Mammary epithelial cell (primary cell): ENCODE measurements at regions of chr5 and their contacts with region 1.

Region 1: DNA sequence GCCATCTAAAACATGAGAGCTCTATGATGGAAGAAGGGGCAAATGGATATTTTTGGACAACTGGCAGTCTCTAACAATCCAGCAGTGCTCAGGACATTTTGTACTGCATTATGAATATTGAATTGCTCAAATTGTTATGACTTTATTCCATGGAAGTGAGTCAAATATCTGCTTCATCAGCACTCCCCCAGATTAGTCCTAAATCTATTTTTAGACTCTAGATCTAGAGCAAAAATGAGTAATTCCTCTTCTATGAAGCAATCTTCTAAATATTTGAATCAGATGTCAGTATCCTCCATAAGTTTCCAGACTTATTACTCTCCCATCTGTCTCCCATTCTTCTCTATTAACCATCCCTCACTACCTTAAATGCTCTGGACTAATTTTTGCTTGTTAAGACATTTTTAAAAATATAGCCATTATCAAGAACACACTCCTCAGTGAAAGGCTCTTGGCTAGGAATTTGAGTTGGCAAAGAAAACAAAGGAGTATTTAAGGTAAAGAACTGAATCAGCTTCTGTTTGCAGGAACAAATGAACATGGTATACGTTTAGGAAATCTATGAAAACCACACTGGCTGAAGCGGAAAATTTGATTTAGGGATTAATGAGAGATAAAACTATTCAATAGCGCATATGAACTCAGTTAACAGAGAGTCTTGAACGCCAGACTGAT is 300.9 kb downstream of the MCTP1 start:
- DNase-seq: peak; percentile 63
- H3K4me3 ChIP-seq: no peak overlapping the region
- H3K27ac ChIP-seq: no peak overlapping the region
- H3K4me1 ChIP-seq: peaks cover 5% of the 10 kb centered on the region
- H3K27me3 ChIP-seq: no peaks in the 10 kb centered on the region
- CTCF ChIP-seq: no peak

Region 2: DNA sequence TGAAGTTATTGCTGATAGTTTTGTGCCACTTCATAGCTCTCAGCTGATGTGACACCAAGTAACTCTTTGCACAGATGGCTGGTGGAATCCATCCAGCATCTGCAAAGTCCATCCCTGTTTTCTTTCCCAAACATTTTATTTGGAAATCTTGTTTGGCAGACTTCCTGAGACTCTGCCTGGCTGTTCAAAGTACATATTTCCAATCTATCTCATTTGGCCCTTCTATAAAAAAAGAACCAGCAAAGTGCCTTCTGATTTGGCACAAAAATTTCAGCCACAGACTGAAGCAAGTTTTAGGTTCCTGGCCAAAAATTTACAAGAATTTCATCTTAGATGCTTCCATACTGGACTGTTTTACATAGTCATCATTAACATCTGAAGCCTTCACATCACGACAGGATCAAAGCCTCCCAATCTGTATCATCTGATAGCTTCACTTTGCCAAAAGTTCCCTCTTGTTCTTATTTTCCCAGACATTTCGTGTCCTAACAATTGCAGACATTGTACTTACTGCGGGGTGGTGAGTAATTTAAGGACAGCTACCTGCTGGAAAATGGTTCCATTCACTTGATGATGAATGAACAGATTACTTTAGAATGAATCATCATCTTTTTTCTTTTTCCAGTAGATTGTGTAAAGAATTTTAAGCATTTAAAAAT is 742.9 kb before region 1 on chr5:
- CTCF ChIA-PET with region 1: no interaction called
- dilution Hi-C with region 1: no loop called
- in situ Hi-C with region 1: no loop called
- intact Hi-C with region 1: no loop called
- DNase-seq: peak; percentile 83
- H3K4me3 ChIP-seq: no peak overlapping the region
- H3K27ac ChIP-seq: peak overlapping the region; percentile 19
- H3K4me1 ChIP-seq: peaks cover 10% of the 10 kb centered on the region
- H3K27me3 ChIP-seq: no peaks in the 10 kb centered on the region
- CTCF ChIP-seq: no peak

Region 3: GRCh38 chr5:95238560-95239325 is 254.7 kb after region 1 on chr5:
- CTCF ChIA-PET with region 1: no interaction called
- dilution Hi-C with region 1: no loop called
- in situ Hi-C with region 1: loop called in 1 of 2 experiments (anchors 25 kb)
- intact Hi-C with region 1: no loop called
- DNase-seq: peak; percentile 7
- H3K4me3 ChIP-seq: no peak overlapping the region
- H3K27ac ChIP-seq: no peak overlapping the region
- H3K4me1 ChIP-seq: no peaks in the 10 kb centered on the region
- H3K27me3 ChIP-seq: peaks cover 5% of the 10 kb centered on the region
- CTCF ChIP-seq: peak in 1 of 2 donors; percentile 49